ENCODE measurements at regions of chr16 and their contacts with region 1.

Region 1: DNA sequence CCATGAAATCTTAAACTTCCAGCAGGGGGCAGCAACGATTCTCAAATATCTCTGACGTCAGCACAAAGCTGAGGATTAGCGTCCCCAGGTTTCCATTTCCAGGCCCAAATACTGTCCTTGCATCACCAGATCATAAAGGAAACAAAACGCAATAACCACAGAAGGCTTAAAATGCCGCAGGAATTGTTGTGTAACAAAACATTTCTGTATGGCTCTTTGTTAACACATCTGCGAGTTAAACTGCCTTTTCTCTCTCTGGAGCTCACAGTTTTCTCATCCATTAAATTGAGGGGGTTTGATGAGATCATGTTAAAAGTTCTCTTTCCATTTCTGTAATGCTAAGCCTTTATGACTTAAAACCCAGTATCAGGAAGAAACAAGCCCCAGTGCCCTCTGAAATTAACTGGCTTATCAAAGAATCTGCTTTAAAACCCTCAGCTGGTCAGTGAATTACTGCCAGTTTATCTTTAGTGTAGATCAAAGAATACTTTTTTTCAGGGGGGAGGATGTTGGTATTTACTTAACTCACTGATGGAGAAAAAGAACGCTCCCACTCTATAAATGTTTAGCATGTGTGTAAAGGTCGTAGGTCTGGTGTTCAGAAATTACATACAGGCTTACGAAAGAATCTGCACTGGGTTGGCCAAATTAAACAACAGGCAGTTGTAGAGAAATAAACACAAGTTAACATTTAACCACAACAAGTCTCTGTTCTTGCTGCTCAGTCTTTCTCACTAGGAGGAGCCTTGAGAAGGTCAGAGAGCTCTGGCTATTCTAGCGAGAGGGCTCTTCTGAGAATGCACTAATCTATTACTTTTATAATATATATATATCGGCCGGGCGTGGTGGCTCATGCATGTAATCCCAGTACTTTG is 10.6 kb upstream of the TERF2 start:
- DNase-seq: peak; percentile 85
- H3K4me3 ChIP-seq: no peak overlapping the region
- H3K27ac ChIP-seq: no peak overlapping the region
- H3K4me1 ChIP-seq: peaks cover 11% of the 10 kb centered on the region
- CTCF ChIP-seq: peak; percentile 94

Region 2: GRCh38 chr16:69410285-69410990 is 14.0 kb after region 1 on chr16:
- CTCF ChIA-PET with region 1: no interaction called
- POLR2A ChIA-PET with region 1: interaction called, 12 read pairs
- intact Hi-C with region 1: no loop called
- DNase-seq: no peak
- H3K4me3 ChIP-seq: no peak overlapping the region
- H3K27ac ChIP-seq: no peak overlapping the region
- H3K4me1 ChIP-seq: no peaks in the 10 kb centered on the region
- CTCF ChIP-seq: no peak

Region 3: DNA sequence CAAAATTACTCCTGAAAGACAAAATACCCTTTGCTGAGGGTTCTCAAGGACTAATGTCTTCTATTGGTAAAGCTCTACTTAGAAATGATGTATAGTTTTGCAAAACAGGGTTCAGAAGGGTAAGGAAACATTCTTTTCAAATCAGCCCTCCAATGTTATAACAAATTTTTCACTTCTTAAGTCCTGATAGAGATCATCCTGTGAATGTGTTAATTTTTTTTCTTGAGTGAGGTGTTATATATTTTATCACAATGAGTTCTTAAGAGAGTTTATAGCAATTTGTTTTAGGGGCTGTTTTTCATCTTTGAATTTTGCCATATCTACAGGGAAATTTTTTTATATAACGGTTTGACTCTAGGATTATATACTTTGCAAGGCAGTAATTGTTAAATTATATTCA is 57.5 kb after region 1 on chr16:
- CTCF ChIA-PET with region 1: no interaction called
- POLR2A ChIA-PET with region 1: no interaction called
- intact Hi-C with region 1: no loop called
- DNase-seq: no peak
- H3K4me3 ChIP-seq: no peak overlapping the region
- H3K27ac ChIP-seq: no peak overlapping the region
- H3K4me1 ChIP-seq: no peaks in the 10 kb centered on the region
- CTCF ChIP-seq: no peak

Region 4: DNA sequence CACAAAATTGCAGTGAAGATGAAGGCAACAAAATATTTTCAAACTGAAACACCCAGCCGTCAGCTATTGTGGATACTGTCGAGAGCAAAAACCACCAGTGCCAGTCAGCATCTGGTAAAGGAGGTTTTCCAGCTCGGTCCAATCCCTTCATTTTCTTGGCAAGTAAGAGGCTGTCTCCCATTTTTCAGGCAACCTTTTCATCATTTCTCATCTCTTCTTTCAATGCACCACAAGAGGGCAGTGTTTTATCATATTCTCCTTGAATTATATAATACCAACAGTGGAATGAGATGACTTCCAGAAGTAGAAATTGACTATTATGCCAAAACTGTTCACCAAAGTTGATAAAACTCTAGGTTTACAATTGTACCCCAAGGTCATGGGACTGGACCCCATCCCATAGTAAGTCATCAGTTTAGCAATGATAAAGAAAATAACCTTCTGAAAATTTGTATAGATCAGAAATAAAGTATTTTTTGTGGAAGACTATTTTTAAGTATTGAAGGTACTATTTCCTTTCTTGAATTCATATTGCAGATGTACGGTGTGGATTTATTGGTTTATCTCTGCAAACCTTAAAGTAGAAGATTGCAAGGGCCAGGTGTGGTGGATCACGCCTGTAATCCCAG is 313.1 kb after region 1 on chr16:
- CTCF ChIA-PET with region 1: no interaction called
- POLR2A ChIA-PET with region 1: no interaction called
- intact Hi-C with region 1: loop called (anchors 5 kb)
- DNase-seq: peak; percentile 78
- H3K4me3 ChIP-seq: no peak overlapping the region
- H3K27ac ChIP-seq: no peak overlapping the region
- H3K4me1 ChIP-seq: no peaks in the 10 kb centered on the region
- CTCF ChIP-seq: peak; percentile 97

Region 5: DNA sequence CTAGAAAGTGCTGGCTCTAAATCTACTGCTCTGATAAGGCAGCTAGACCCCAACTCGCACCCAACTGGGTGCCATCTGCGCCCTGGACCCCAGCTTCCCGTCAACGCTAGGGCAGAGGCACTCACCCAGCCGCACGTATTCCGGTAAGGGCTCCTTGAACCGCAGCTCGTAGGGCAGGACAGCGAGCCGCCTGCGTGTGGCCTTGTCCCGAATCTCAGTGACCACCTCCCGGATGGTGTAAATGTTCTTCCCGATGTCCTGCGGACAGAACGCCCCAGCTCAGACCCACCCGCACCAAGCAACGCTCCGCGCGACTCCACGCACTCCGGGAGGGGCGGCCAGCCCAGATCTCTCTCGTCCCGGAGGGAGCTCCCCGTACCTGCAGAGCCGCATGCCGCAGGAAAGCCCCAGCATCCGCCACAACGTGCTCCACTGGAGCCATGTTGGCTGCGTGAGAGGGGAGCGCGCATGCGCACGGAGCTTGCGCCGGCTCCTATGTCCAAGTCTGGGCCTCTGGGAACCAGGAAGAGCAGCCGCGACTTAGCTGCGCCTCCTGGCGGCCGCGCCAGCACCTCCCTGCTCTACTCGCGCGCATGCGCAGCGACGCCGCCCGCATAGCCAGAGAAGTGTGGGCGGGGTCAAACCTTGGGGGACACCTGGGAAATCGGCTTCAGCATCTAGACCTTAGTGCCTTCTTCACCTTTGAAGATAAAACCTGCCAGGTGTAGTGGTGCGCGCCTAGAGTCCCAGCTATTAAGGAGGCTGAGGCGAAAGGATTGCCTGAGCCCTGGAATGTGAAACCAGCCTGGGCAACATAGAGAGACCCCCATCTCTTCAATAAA is 358.3 kb after region 1 on chr16 and contains the start of gene NOB1:
- CTCF ChIA-PET with region 1: interaction called, 5 read pairs
- POLR2A ChIA-PET with region 1: interaction called, 8 read pairs
- intact Hi-C with region 1: loop called (anchors 2 kb)
- DNase-seq: peak; percentile 98
- H3K4me3 ChIP-seq: peak within 1 kb of the TSS; percentile 88
- H3K27ac ChIP-seq: peak within 1 kb of the TSS; percentile 43
- H3K4me1 ChIP-seq: peaks cover 15% of the 10 kb centered on the region
- CTCF ChIP-seq: peak; percentile 91
- total RNA-seq, gene NOB1: 29.3 and 36.9 TPM in 2 replicates

Region 6: GRCh38 chr16:69930117-69930776 is 533.8 kb after region 1 on chr16:
- CTCF ChIA-PET with region 1: no interaction called
- POLR2A ChIA-PET with region 1: no interaction called
- intact Hi-C with region 1: loop called (anchors 5 kb)
- DNase-seq: peak; percentile 68
- H3K4me3 ChIP-seq: no peak overlapping the region
- H3K27ac ChIP-seq: no peak overlapping the region
- H3K4me1 ChIP-seq: no peaks in the 10 kb centered on the region
- CTCF ChIP-seq: peak; percentile 88

Measured in OCI-LY7 (cell line).